Natural killer cell (primary cell): ENCODE measurements at regions of chr10 and their contacts with region 1.

Region 1: DNA sequence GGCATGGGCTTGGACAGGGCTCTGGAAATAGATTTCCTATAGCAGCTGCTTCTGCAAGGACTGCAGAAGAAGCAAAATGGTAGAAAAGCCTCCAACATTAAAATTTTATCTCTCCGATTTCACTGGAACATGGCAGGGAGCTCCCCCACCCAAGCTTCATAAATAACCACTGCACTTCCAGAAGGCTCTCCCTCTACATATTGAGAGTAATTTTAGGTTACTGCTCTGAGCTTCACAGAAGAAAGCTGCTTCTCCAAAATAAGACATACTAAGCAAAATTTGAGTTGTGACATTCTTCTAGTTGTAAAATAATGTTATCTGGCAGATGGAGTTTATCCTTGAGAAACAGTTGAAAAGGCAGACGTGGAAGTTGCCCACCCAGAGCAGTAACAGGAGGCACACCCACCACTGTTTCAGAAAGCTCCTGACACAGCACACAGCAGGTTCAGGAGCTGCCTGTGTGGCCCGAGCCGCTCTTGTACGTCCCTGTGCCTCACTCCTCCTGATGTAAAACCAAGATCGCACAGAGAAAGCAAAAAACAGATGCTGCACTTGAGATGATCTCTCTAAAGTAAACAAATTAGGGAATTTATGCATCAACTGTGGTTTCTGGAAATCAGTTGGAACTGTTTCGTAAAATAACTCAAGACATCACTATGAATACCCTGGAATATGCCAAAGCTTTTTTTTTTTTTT is 621.0 kb downstream of the PARD3 start:
- DNase-seq: no peak
- ATAC-seq: no peak
- H3K4me3 ChIP-seq: no peak overlapping the region
- H3K4me3 Mint-ChIP-seq: no peak overlapping the region
- H3K27ac ChIP-seq: no peak overlapping the region
- H3K27ac Mint-ChIP-seq: no peak overlapping the region
- H3K4me1 ChIP-seq: no peaks in the 10 kb centered on the region
- H3K4me1 Mint-ChIP-seq: peaks cover 5 to 6% of the 10 kb centered on the region in 2 donors
- H3K27me3 ChIP-seq: no peaks in the 10 kb centered on the region
- H3K27me3 Mint-ChIP-seq: peaks cover 22 to 51% of the 10 kb centered on the region in 2 donors
- CTCF ChIP-seq: no peak

Region 2: DNA sequence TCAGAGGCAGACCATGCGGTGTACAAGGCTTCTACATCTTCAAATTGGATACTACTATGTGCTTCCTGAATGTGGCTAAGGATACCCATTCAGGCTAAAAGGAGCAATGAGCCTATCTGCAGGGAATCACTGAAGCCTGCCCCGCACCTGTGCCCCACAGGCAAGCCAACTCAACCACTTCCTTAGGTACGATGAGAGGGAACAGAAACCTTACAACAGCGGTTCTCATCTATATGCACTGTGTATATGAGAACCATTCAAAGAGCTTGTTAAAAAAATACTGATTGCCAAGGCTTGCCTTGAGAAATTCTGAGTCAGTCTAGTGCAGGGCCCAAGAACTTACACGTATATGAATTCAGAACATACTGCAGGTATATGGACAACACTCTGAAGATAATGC is 58.6 kb before region 1 on chr10:
- intact Hi-C with region 1: no loop called
- DNase-seq: no peak
- ATAC-seq: no peak
- H3K4me3 ChIP-seq: no peak overlapping the region
- H3K4me3 Mint-ChIP-seq: no peak overlapping the region
- H3K27ac ChIP-seq: no peak overlapping the region
- H3K27ac Mint-ChIP-seq: no peak overlapping the region
- H3K4me1 ChIP-seq: no peaks in the 10 kb centered on the region
- H3K4me1 Mint-ChIP-seq: no peaks in the 10 kb centered on the region
- H3K27me3 ChIP-seq: no peaks in the 10 kb centered on the region
- H3K27me3 Mint-ChIP-seq: peaks cover 0 to 8% of the 10 kb centered on the region in 2 donors
- CTCF ChIP-seq: no peak

Region 3: GRCh38 chr10:34205452-34205851 is 11.4 kb after region 1 on chr10:
- intact Hi-C with region 1: loop called (anchors 2 kb)
- DNase-seq: peak in 1 of 2 donors; percentile 6
- ATAC-seq: peak in 1 of 3 donors; percentile 46
- H3K4me3 ChIP-seq: no peak overlapping the region
- H3K4me3 Mint-ChIP-seq: peak overlapping the region; percentile 77
- H3K27ac ChIP-seq: no peak overlapping the region
- H3K27ac Mint-ChIP-seq: no peak overlapping the region
- H3K4me1 ChIP-seq: peaks cover 18% of the 10 kb centered on the region
- H3K4me1 Mint-ChIP-seq: peaks cover 34 to 42% of the 10 kb centered on the region in 2 donors
- H3K27me3 ChIP-seq: peaks cover 7% of the 10 kb centered on the region
- H3K27me3 Mint-ChIP-seq: peaks cover 23 to 63% of the 10 kb centered on the region in 2 donors
- CTCF ChIP-seq: no peak